Heart right ventricle (tissue), 16 donors: ENCODE measurements at regions of chr18 and their contacts with region 1.

Region 1: DNA sequence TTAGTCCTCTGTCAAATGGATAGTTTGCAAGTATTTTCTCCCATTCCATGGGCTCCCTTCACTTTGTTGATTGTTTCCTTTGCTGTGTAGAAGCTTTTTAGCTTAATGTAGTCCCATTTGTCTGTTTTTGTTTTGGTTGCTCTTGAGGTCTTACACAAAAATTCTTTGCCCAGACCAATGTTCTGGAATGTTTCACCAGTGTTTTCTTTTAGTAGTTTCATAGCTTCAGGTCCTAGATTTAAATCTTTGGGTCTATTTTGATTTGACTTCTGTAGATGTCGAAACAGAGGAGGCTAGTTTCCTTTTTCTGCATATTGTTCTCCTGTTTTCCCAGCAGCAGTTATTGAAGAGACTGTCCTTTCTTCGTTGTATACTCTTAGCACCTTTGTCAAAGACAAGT is 351.6 kb downstream of the PTPRM start:
- DNase-seq: no peak
- ATAC-seq: no peak
- H3K4me3 ChIP-seq: no peak overlapping the region
- H3K27ac ChIP-seq: no peak overlapping the region
- H3K4me1 ChIP-seq: peaks cover 0 to 46% (median 37%) of the 10 kb centered on the region in 9 donors
- H3K27me3 ChIP-seq: no peaks in the 10 kb centered on the region
- CTCF ChIP-seq: no peak

Region 2: GRCh38 chr18:7879717-7880116 is 39.0 kb before region 1 on chr18:
- intact Hi-C with region 1: no loop called
- DNase-seq: no peak
- ATAC-seq: no peak
- H3K4me3 ChIP-seq: no peak overlapping the region
- H3K27ac ChIP-seq: peak overlapping the region in 2 of 10 donors; percentile 21 to 56
- H3K4me1 ChIP-seq: peaks cover 0 to 67% (median 40%) of the 10 kb centered on the region in 9 donors
- H3K27me3 ChIP-seq: no peaks in the 10 kb centered on the region
- CTCF ChIP-seq: no peak

Region 3: GRCh38 chr18:8031496-8031895 is 112.8 kb after region 1 on chr18:
- intact Hi-C with region 1: loop called in 1 of 10 experiments (anchors 10 kb)
- DNase-seq: no peak
- ATAC-seq: peak in 3 of 8 donors; percentile 30 to 66 (median 58)
- H3K4me3 ChIP-seq: no peak overlapping the region
- H3K27ac ChIP-seq: no peak overlapping the region
- H3K4me1 ChIP-seq: peaks cover 0 to 29% (median 10%) of the 10 kb centered on the region in 9 donors
- H3K27me3 ChIP-seq: no peaks in the 10 kb centered on the region
- CTCF ChIP-seq: no peak